ENCODE measurements at regions of chr20 and their contacts with region 1.

Region 1: GRCh38 chr20:59055295-59055694 is 12.7 kb upstream of the PRELID3B start:
- DNase-seq: peak; percentile 74
- ATAC-seq: peak; percentile 73
- H3K4me3 ChIP-seq: no peak overlapping the region
- H3K27ac ChIP-seq: no peak overlapping the region
- H3K4me1 ChIP-seq: no peaks in the 10 kb centered on the region
- H3K27me3 ChIP-seq: peaks cover 28% of the 10 kb centered on the region
- CTCF ChIP-seq: peak; percentile 80

Region 2: GRCh38 chr20:58950603-58951002 is 104.7 kb before region 1 on chr20:
- CTCF ChIA-PET with region 1: no interaction called
- POLR2A ChIA-PET with region 1: no interaction called
- intact Hi-C with region 1: no loop called
- DNase-seq: no peak
- ATAC-seq: no peak
- H3K4me3 ChIP-seq: no peak overlapping the region
- H3K27ac ChIP-seq: no peak overlapping the region
- H3K4me1 ChIP-seq: no peaks in the 10 kb centered on the region
- H3K27me3 ChIP-seq: peaks cover 53% of the 10 kb centered on the region
- CTCF ChIP-seq: peak; percentile 30; the same call in 1 of the 2 replicates

Region 3: DNA sequence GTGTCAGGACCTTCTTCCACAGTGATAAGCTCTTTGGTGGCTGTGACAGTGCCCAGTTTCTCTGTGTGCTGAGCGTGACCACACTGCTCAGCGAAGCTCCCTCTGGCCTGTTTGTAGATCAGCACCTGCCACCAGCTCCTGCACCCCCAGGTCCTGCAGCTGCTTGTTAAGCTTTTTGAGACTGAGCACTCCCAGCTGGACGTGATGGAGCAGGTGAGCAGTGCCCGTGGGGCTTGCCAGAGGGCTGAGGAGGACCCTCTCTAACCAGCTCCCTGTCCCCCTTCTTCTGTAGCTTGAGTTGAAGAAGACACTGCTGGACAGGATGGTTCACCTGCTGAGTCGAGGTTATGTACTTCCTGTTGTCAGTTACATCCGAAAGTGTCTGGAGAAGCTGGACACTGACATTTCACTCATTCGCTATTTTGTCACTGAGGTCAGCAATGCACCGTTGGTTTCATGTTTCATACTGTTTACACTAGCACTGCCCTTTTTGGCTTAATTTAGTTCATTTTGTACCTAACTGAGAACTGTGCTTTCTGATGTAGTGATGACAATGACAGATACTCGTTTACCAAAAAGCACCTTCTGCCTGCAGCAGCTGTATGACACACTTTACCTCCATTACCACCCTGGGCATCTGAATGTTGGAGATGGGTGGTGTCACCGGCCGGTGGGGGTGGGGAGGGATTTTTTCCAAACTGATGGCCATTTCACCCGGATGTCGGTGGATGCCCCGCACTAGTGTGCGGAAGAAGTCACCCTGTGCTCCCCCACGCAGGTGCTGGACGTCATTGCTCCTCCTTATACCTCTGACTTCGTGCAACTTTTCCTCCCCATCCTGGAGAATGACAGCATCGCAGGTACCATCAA is 61.7 kb before region 1 on chr20:
- CTCF ChIA-PET with region 1: interaction called, 17 read pairs
- POLR2A ChIA-PET with region 1: no interaction called
- intact Hi-C with region 1: no loop called
- DNase-seq: peak; percentile 25
- ATAC-seq: peak; percentile 73
- H3K4me3 ChIP-seq: no peak overlapping the region
- H3K27ac ChIP-seq: no peak overlapping the region
- H3K4me1 ChIP-seq: peaks cover 19% of the 10 kb centered on the region
- H3K27me3 ChIP-seq: no peaks in the 10 kb centered on the region
- CTCF ChIP-seq: no peak

Region 4: GRCh38 chr20:59032023-59032712 is 23.1 kb before region 1 on chr20 and contains the start of gene ATP5F1E:
- CTCF ChIA-PET with region 1: no interaction called
- POLR2A ChIA-PET with region 1: no interaction called
- intact Hi-C with region 1: no loop called
- DNase-seq: peak; percentile 98
- ATAC-seq: peak; percentile 91
- H3K4me3 ChIP-seq: peak within 1 kb of the TSS; percentile 77
- H3K27ac ChIP-seq: peak within 1 kb of the TSS; percentile 68
- H3K4me1 ChIP-seq: peaks cover 54% of the 10 kb centered on the region
- H3K27me3 ChIP-seq: no peaks in the 10 kb centered on the region
- CTCF ChIP-seq: no peak
- total RNA-seq, gene ATP5F1E: 47.1 and 58.5 TPM in 2 replicates

Region 5: GRCh38 chr20:59082077-59082740 is 26.9 kb after region 1 on chr20:
- CTCF ChIA-PET with region 1: no interaction called
- POLR2A ChIA-PET with region 1: no interaction called
- intact Hi-C with region 1: loop called (anchors 1 kb)
- DNase-seq: peak; percentile 71
- ATAC-seq: peak; percentile 59; the same call in 1 of the 2 replicates
- H3K4me3 ChIP-seq: no peak overlapping the region
- H3K27ac ChIP-seq: no peak overlapping the region
- H3K4me1 ChIP-seq: peaks cover 11% of the 10 kb centered on the region
- H3K27me3 ChIP-seq: peaks cover 34% of the 10 kb centered on the region
- CTCF ChIP-seq: peak; percentile 52

Region 6: GRCh38 chr20:59222253-59223181 is 167.2 kb after region 1 on chr20:
- CTCF ChIA-PET with region 1: no interaction called
- POLR2A ChIA-PET with region 1: no interaction called
- intact Hi-C with region 1: loop called (anchors 1 kb)
- DNase-seq: peak; percentile 87
- ATAC-seq: peak; percentile 98
- H3K4me3 ChIP-seq: peak overlapping the region; percentile 71
- H3K27ac ChIP-seq: no peak overlapping the region
- H3K4me1 ChIP-seq: peaks cover 9% of the 10 kb centered on the region; the same call in 1 of the 2 replicates
- H3K27me3 ChIP-seq: peaks cover 93% of the 10 kb centered on the region
- CTCF ChIP-seq: peak; percentile 99

Measured in PC-3 (cell line).